IMR-90 (cell line): ENCODE measurements at regions of chr10 and their contacts with region 1.

Region 1: DNA sequence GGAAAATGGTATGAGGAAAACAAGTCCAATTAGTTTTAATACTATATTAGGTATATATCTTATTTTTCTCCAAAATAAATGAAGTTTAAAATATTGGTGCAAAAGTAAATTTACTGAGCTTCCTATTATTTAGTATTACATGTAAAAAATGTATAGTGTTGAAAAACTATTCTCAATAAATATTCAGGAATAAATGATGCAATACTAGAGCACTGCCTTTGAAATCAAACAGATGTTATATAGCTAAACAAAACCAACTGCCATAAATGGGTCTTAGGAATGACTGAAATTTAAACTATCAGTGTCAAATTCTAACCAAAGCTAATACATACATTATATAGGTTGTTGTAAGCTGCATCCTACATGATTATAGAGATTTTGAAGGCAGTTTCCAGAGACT is 1434.0 kb upstream of the LRRTM3 start:
- DNase-seq: no peak
- ATAC-seq: no peak
- H3K4me3 ChIP-seq: no peak overlapping the region
- H3K27ac ChIP-seq: no peak overlapping the region
- H3K4me1 ChIP-seq: no peaks in the 10 kb centered on the region
- H3K27me3 ChIP-seq: no peaks in the 10 kb centered on the region
- CTCF ChIP-seq: no peak
- POLR2A ChIP-seq: no peak
- RAD21 ChIP-seq: no peak

Region 2: DNA sequence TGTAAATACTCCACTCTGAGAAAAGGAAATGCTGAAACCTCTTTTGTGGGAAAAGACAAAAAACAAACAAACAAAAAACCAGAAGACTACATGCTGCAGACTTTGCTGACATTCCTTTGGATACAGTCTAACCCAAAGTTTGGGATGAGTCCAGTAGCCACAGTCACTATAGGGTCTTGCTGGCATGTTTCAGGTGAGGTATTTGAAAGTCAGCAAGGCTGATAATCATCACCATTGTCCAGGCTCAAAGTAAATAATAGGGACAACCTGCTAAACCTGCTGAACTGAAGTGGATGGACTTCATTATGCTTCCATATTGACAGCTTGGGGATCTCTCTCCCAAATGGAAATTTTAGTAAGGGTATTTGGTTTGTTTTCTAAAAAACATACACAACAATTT is 347.0 kb after region 1 on chr10:
- CTCF ChIA-PET with region 1: interaction called, 10 read pairs
- POLR2A ChIA-PET with region 1: no interaction called
- dilution Hi-C with region 1: no loop called
- in situ Hi-C with region 1: no loop called
- intact Hi-C with region 1: no loop called
- DNase-seq: no peak
- ATAC-seq: no peak
- H3K4me3 ChIP-seq: no peak overlapping the region
- H3K27ac ChIP-seq: no peak overlapping the region
- H3K4me1 ChIP-seq: no peaks in the 10 kb centered on the region
- H3K27me3 ChIP-seq: no peaks in the 10 kb centered on the region
- CTCF ChIP-seq: no peak
- POLR2A ChIP-seq: no peak
- RAD21 ChIP-seq: no peak